ENCODE measurements at regions of chr15 and their contacts with region 1.

Region 1: DNA sequence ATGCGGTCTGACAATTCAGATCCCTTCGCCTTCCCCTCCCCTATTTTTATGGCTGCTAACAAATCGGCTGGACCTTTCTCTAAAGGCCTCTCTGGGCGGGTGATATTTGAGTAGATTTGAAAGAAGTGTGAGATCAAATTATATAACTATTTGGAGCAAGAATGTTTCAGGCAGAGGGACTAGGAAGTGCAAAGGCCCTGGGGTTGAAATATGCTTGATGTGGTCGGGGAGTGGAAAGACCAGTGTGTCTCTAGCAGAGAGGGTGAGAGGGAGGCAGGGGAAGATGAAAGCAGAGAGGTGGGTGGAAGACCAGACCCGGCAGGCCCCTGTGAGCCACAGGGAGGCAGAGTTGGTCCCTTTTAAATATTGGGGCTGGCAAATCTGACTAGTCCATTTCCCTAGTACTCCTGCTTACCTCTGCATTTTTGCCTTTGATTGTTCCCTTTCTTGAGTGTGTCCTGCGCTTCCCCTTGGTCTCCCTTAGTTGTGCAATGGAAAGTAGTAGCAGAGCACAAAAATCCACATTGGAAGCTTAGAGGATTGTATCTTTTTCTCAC is 32.3 kb downstream of the SLCO3A1 start:
- DNase-seq: no peak
- H3K4me3 Mint-ChIP-seq: no peak overlapping the region
- H3K27ac Mint-ChIP-seq: no peak overlapping the region
- H3K4me1 Mint-ChIP-seq: peaks cover 12% of the 10 kb centered on the region
- H3K27me3 Mint-ChIP-seq: no peaks in the 10 kb centered on the region

Region 2: GRCh38 chr15:92077353-92078085 is 191.7 kb after region 1 on chr15:
- intact Hi-C with region 1: loop called (anchors 1 kb)
- DNase-seq: peak; percentile 89
- H3K4me3 Mint-ChIP-seq: no peak overlapping the region
- H3K27ac Mint-ChIP-seq: no peak overlapping the region
- H3K4me1 Mint-ChIP-seq: peaks cover 18% of the 10 kb centered on the region
- H3K27me3 Mint-ChIP-seq: no peaks in the 10 kb centered on the region